CD14-positive monocyte (primary cell): ENCODE measurements at regions of chr15 and their contacts with region 1.

Region 1: GRCh38 chr15:42495361-42496212 is at the start of gene SNAP23:
- DNase-seq: peak; percentile 82 to 88 (median 87)
- H3K4me3 ChIP-seq: peak within 1 kb of the TSS; percentile 93 to 98 (median 96)
- H3K4me3 Mint-ChIP-seq: peak within 1 kb of the TSS; percentile 100
- H3K27ac ChIP-seq: peak within 1 kb of the TSS; percentile 59 to 82
- H3K27ac Mint-ChIP-seq: peak within 1 kb of the TSS; percentile 88 to 99 (median 95)
- H3K4me1 ChIP-seq: peaks cover 71 to 79% of the 10 kb centered on the region in 2 donors
- H3K4me1 Mint-ChIP-seq: peaks cover 72% of the 10 kb centered on the region
- H3K27me3 ChIP-seq: no peaks in the 10 kb centered on the region
- H3K27me3 Mint-ChIP-seq: peaks cover 0 to 4% (median 0%) of the 10 kb centered on the region in 3 donors
- CTCF ChIP-seq: no peak
- polyA plus RNA-seq, gene SNAP23: 104 to 198 (median 187) TPM

Region 2: GRCh38 chr15:42457445-42458442 is 37.8 kb before region 1 on chr15:
- intact Hi-C with region 1: no loop called
- DNase-seq: no peak
- H3K4me3 ChIP-seq: no peak overlapping the region
- H3K4me3 Mint-ChIP-seq: no peak overlapping the region
- H3K27ac ChIP-seq: peak overlapping the region in 1 of 2 donors; percentile 21
- H3K27ac Mint-ChIP-seq: peak overlapping the region in 4 of 7 donors; percentile 36 to 84 (median 64)
- H3K4me1 ChIP-seq: no peaks in the 10 kb centered on the region
- H3K4me1 Mint-ChIP-seq: no peaks in the 10 kb centered on the region
- H3K27me3 ChIP-seq: no peaks in the 10 kb centered on the region
- H3K27me3 Mint-ChIP-seq: no peaks in the 10 kb centered on the region
- CTCF ChIP-seq: no peak

Region 3: GRCh38 chr15:42528970-42529369 is 33.4 kb after region 1 on chr15:
- intact Hi-C with region 1: no loop called
- DNase-seq: no peak
- H3K4me3 ChIP-seq: no peak overlapping the region
- H3K4me3 Mint-ChIP-seq: no peak overlapping the region
- H3K27ac ChIP-seq: no peak overlapping the region
- H3K27ac Mint-ChIP-seq: no peak overlapping the region
- H3K4me1 ChIP-seq: no peaks in the 10 kb centered on the region
- H3K4me1 Mint-ChIP-seq: no peaks in the 10 kb centered on the region
- H3K27me3 ChIP-seq: no peaks in the 10 kb centered on the region
- H3K27me3 Mint-ChIP-seq: no peaks in the 10 kb centered on the region
- CTCF ChIP-seq: no peak

Region 4: DNA sequence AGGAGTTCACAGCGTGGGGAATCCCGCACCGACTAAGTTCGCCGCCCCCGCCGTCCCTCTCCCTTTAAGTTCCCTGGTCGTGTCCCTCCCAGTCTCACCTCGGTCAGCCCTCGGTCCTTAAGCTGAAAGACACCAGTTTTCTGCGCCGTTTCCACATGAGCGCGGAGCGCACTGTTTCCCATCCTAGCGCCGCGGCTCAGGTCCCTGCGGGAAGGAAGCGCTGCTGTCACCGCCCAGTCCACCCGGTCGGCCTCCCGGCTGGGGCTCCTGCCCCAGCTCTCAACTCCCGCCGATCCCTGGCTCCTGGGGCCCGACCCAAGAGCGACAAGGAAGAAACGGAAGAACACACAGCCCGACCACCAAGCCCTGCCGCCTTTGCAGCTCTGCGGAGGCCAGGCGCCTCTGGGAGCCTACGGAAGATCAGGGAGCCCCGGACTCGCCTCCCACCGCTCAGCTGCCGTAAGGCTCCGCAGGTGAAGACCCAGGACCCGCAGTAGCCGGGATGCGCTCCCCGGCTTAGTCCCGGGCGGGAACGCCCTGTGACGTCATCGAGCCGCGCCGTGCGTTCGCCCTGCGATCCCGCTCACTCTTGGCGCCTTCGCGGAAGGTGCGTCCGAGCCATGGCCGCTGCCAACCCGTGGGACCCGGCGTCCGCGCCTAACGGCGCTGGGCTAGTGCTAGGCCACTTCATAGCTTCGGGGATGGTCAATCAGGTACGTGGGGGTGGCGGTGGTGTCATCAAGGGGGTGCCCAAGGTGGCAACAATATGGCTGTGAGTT is 52.9 kb after region 1 on chr15 and contains the starts of genes HAUS2 and LRRC57:
- intact Hi-C with region 1: loop called (anchors 2 kb)
- DNase-seq: peak; percentile 78 to 80 (median 79)
- H3K4me3 ChIP-seq: peak within 1 kb of the TSS; percentile 59 to 99 (median 82)
- H3K4me3 Mint-ChIP-seq: peak within 1 kb of the TSS; percentile 98 to 99
- H3K27ac ChIP-seq: peak within 1 kb of the TSS; percentile 86 to 95
- H3K27ac Mint-ChIP-seq: peak within 1 kb of the TSS; percentile 93 to 99 (median 96)
- H3K4me1 ChIP-seq: peaks cover 40 to 59% of the 10 kb centered on the region in 2 donors
- H3K4me1 Mint-ChIP-seq: peaks cover 53% of the 10 kb centered on the region
- H3K27me3 ChIP-seq: no peaks in the 10 kb centered on the region
- H3K27me3 Mint-ChIP-seq: peaks cover 0 to 3% (median 0%) of the 10 kb centered on the region in 3 donors
- CTCF ChIP-seq: no peak
- polyA plus RNA-seq, gene HAUS2: 12.5 to 22.0 (median 15.9) TPM
- polyA plus RNA-seq, gene LRRC57: 7.8 to 17.4 (median 11.2) TPM

Region 5: GRCh38 chr15:42558739-42559138 is 63.2 kb after region 1 on chr15:
- intact Hi-C with region 1: no loop called
- DNase-seq: no peak
- H3K4me3 ChIP-seq: no peak overlapping the region
- H3K4me3 Mint-ChIP-seq: no peak overlapping the region
- H3K27ac ChIP-seq: no peak overlapping the region
- H3K27ac Mint-ChIP-seq: no peak overlapping the region
- H3K4me1 ChIP-seq: peaks cover 0 to 3% of the 10 kb centered on the region in 2 donors
- H3K4me1 Mint-ChIP-seq: peaks cover 5% of the 10 kb centered on the region
- H3K27me3 ChIP-seq: no peaks in the 10 kb centered on the region
- H3K27me3 Mint-ChIP-seq: peaks cover 0 to 2% (median 0%) of the 10 kb centered on the region in 3 donors
- CTCF ChIP-seq: no peak

Region 6: DNA sequence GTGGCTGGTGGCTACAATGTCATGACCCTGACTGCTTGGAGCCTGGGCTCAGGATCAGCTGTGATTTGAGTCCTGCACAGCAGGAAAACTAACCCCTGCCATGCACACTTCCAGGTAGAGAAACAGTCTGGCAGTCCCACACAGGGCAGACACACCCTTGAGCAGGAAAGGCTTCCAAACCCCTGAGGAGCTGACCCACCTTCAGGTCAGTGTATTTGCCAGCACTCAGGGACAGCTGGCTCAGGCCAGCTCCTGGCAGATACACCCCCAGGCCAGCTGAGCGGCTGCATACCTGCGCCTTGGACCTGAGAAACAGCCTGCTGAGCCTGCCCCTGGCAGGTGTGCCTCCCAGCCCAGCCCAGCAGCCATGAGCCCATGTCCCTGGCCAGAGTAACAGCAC is 263.5 kb after region 1 on chr15:
- intact Hi-C with region 1: no loop called
- DNase-seq: no peak
- H3K4me3 ChIP-seq: no peak overlapping the region
- H3K4me3 Mint-ChIP-seq: no peak overlapping the region
- H3K27ac ChIP-seq: no peak overlapping the region
- H3K27ac Mint-ChIP-seq: no peak overlapping the region
- H3K4me1 ChIP-seq: no peaks in the 10 kb centered on the region
- H3K4me1 Mint-ChIP-seq: no peaks in the 10 kb centered on the region
- H3K27me3 ChIP-seq: no peaks in the 10 kb centered on the region
- H3K27me3 Mint-ChIP-seq: no peaks in the 10 kb centered on the region
- CTCF ChIP-seq: no peak